IMR-90 (cell line): ENCODE measurements at regions of chr3 and their contacts with region 1.

Region 1: DNA sequence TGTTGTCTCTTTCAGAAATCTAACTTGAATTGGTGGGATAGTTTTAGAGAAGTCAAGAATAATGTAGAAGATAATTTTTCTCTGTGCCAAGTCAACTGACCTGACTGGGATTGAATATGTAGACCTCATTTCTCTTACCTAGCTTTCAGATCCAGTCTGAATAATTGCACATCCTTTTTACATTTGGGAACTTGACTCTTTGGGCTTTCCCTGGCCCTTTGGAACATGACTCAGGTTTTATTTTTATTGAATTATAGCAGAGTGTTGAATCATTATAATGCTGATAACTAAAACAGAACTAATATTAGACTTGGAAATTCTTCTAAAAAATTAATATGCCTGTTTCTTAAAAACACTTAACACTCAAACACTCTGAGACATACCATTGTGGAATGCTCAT is 76.5 kb downstream of the PFN2 start:
- DNase-seq: peak; percentile 47
- ATAC-seq: no peak
- H3K4me3 ChIP-seq: no peak overlapping the region
- H3K27ac ChIP-seq: no peak overlapping the region
- H3K4me1 ChIP-seq: peaks cover 1% of the 10 kb centered on the region; the same call in 1 of the 2 replicates
- H3K27me3 ChIP-seq: no peaks in the 10 kb centered on the region
- CTCF ChIP-seq: no peak
- POLR2A ChIP-seq: no peak
- RAD21 ChIP-seq: no peak

Region 2: GRCh38 chr3:149879872-149880271 is 14.3 kb before region 1 on chr3:
- CTCF ChIA-PET with region 1: interaction called, 11 read pairs
- POLR2A ChIA-PET with region 1: no interaction called
- dilution Hi-C with region 1: no loop called
- in situ Hi-C with region 1: no loop called
- intact Hi-C with region 1: no loop called
- DNase-seq: peak; percentile 68
- ATAC-seq: peak; percentile 98
- H3K4me3 ChIP-seq: no peak overlapping the region
- H3K27ac ChIP-seq: no peak overlapping the region
- H3K4me1 ChIP-seq: no peaks in the 10 kb centered on the region
- H3K27me3 ChIP-seq: no peaks in the 10 kb centered on the region
- CTCF ChIP-seq: peak; percentile 62
- POLR2A ChIP-seq: no peak
- RAD21 ChIP-seq: peak; percentile 55